ENCODE measurements at regions of chr19 and their contacts with region 1.

Region 1: DNA sequence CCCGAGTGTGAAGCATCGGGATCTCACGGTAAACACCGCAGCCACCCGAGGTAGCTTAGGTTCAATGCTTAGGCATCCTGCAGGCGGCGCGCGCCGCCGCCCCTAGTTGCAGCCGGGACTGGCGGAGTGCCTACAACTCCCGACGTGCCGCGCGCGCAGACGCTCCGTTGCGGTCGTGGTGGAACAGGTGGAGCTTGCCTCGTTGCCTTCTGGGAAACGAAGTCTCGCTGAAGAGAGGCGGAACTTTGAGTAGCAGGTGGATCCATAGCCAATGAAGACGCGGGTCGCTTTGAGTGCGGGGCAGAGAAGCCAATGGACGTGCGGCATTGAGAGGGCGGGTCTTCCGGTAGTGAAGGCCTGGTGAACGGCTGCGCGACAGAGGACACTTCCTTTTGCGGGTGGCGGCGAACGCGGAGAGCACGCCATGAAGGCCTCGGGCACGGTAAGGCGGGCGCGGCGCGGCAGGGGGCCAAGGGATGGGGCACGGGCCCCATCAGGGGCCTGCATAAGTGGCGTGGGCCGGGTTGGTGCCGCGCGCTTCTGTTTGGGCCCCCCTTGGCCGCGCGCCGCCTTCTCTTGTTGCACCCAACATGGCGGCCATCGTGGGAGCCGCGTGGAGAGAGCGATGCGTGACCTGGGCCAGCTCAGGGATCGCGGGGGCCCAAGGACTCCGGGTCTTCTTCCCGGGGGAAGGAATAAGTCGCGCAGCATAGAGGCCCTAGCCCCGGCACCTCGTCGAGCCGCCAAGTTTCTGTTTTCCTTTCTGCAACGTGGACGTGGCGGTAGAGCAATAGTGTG is at the start of gene RPL18A:
- DNase-seq: peak; percentile 99 to 100 (median 100)

Region 2: DNA sequence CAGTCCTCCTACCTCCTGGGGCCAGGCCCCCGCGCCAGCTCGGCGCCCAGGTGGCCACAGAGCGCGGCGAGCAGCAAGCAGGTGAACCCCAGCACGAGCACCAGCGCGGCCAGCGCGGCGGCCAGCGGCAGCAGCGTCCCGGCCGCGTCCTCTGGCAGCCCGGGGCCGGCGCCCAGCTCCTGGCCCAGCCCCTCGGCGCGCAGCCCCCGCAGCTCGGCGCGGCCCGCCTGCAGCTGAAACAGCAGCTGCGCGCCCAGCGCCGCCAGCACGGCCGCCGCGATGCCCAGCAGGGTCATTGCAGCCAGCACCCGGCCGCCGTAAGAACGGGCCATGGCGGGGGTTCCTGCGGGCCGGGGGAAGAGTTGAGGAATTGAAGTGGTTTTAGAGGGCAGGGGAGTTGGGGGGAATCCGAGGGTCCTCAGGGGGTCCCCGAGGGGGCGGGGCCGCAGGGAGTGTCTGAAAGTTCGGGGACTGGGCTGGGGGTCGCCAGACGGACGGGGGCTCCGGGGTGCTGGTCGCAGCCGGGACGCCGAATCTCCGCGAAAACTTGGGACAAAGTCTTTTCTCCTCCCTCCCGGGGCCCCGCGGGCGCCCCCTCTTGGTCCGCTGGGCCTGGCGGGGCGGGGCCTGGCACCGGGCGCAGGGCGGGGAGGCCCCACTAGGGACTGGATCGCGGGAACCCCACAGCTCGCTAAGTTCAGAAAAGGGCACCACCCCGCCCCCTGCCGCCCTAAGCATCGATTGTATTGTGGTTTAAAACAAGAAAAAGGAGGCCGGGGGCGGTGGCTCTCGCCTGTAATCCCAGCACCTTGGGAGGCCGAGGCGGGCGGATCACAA is 411.4 kb before region 1 on chr19 and contains the start of gene TMEM221:
- intact Hi-C with region 1: loop called (anchors 10 kb)
- DNase-seq: peak in 5 of 10 donors; percentile 18 to 85 (median 40)

Region 3: GRCh38 chr19:17703824-17704463 is 155.8 kb before region 1 on chr19:
- intact Hi-C with region 1: loop called (anchors 5 kb)
- DNase-seq: peak in 8 of 10 donors; percentile 64 to 92 (median 69)

Region 4: GRCh38 chr19:17932485-17933338 is 73.0 kb after region 1 on chr19 and contains the start of gene CCDC124:
- intact Hi-C with region 1: loop called (anchors 1 kb)
- DNase-seq: peak; percentile 80 to 97 (median 85)

Region 5: DNA sequence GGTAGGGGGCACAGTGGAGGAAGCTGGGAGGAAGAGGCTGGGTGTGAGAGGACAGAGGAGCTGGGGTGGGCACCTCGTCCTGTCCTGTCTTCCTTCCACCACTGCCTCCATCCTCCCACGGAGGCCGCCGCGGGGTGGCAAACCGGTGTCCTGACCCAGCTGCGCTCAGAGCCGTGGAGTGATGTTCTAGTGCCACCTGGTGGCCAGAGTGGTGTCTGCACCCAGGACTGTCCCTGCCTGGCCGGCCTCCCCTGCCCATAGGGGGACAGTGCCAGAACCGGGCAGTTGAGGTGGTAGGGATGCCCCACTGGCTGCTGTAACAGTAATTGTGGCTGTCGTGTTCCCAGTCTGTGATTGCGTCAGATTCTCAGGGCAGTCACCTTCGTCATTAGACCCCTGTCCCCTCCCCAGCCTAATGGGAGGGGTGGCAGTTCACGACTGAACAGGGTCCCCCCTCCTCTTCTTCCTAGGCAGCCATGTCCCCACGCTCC is 137.1 kb after region 1 on chr19:
- intact Hi-C with region 1: loop called (anchors 5 kb)
- DNase-seq: peak; percentile 77 to 97 (median 90)

Region 6: DNA sequence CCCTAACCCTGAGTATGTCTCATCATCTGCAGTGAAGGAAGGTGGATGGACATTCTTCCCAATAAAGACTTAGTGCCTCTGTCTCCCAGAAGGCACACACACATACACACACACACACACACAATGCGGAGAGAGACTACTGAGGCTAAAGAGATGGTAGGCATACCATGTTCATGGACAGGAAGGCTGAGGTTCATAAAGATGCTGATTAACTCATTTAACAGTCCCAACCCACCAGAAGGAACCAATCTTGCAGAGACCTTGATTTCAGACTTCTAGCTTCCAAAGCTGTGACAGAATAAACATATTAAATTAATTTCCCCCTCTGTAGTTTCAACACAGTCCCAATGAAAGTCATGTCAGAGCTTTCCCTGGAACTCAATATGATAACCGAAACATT is 181.3 kb after region 1 on chr19:
- intact Hi-C with region 1: no loop called
- DNase-seq: no peak

Measured in posterior cingulate gyrus (tissue), 11 donors.